B cell (primary cell): ENCODE measurements at regions of chr13 and their contacts with region 1.

Region 1: GRCh38 chr13:20566898-20567874 is at the start of gene IFT88:
- DNase-seq: peak; percentile 84
- ATAC-seq: peak; percentile 90
- H3K4me3 ChIP-seq: peak within 1 kb of the TSS; percentile 64 to 72 (median 67)
- H3K4me3 Mint-ChIP-seq: peak within 1 kb of the TSS; percentile 94
- H3K27ac ChIP-seq: peak within 1 kb of the TSS; percentile 55 to 80
- H3K27ac Mint-ChIP-seq: peak within 1 kb of the TSS; percentile 93
- H3K4me1 ChIP-seq: peaks cover 11 to 12% of the 10 kb centered on the region in 2 donors
- H3K4me1 Mint-ChIP-seq: peaks cover 17% of the 10 kb centered on the region
- H3K27me3 ChIP-seq: no peaks in the 10 kb centered on the region
- H3K27me3 Mint-ChIP-seq: no peaks in the 10 kb centered on the region
- CTCF ChIP-seq: no peak
- total RNA-seq, gene IFT88: 20.2 and 23.3 TPM in 2 replicates

Region 2: GRCh38 chr13:19863323-19864023 is 703.7 kb before region 1 on chr13 and contains the start of gene ZMYM5:
- CTCF ChIA-PET with region 1: no interaction called
- POLR2A ChIA-PET with region 1: no interaction called
- intact Hi-C with region 1: loop called (anchors 2 kb)
- DNase-seq: peak; percentile 97
- ATAC-seq: peak; percentile 88
- H3K4me3 ChIP-seq: peak within 1 kb of the TSS; percentile 71 to 95 (median 83)
- H3K4me3 Mint-ChIP-seq: peak within 1 kb of the TSS; percentile 93
- H3K27ac ChIP-seq: peak within 1 kb of the TSS; percentile 92 to 94
- H3K27ac Mint-ChIP-seq: peak within 1 kb of the TSS; percentile 97
- H3K4me1 ChIP-seq: peaks cover 22 to 26% of the 10 kb centered on the region in 2 donors
- H3K4me1 Mint-ChIP-seq: peaks cover 31% of the 10 kb centered on the region
- H3K27me3 ChIP-seq: no peaks in the 10 kb centered on the region
- H3K27me3 Mint-ChIP-seq: no peaks in the 10 kb centered on the region
- CTCF ChIP-seq: no peak
- total RNA-seq, gene ZMYM5: 23.0 and 26.8 TPM in 2 replicates

Region 3: DNA sequence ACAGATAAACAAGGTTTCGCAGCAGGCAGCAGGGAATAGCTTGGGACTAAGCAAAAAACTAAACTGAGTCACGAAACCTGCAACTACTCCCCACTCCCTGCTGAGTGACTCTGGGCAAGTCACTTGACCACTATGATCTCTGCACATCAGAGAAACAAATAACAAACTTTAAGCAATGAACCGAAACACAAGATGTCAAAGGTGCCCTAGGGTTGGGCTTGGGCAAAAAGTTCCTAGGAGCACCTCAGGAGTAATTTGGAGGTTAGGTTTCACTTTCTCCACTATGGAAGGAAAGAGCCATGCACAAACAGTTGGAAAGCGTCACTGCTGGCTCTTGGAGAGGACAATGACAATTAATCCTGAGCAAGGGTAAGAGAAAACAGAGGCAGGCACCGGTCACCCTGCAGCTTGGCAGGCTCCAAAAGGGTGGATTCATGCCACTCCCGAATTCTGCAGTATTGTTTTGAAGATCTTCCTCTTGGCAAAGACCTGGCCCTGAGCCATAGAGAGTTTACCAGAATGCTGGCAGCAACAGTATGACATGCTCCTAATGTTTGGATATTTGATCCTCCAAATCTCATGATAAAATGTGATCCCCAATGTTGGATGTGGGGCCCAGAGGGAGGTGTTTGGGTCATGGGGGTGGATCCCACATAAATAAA is 101.8 kb before region 1 on chr13:
- CTCF ChIA-PET with region 1: no interaction called
- POLR2A ChIA-PET with region 1: no interaction called
- intact Hi-C with region 1: no loop called
- DNase-seq: no peak
- ATAC-seq: no peak
- H3K4me3 ChIP-seq: no peak overlapping the region
- H3K4me3 Mint-ChIP-seq: no peak overlapping the region
- H3K27ac ChIP-seq: no peak overlapping the region
- H3K27ac Mint-ChIP-seq: no peak overlapping the region
- H3K4me1 ChIP-seq: no peaks in the 10 kb centered on the region
- H3K4me1 Mint-ChIP-seq: no peaks in the 10 kb centered on the region
- H3K27me3 ChIP-seq: no peaks in the 10 kb centered on the region
- H3K27me3 Mint-ChIP-seq: no peaks in the 10 kb centered on the region
- CTCF ChIP-seq: no peak

Region 4: GRCh38 chr13:20525690-20526544 is 41.3 kb before region 1 on chr13 and contains the start of gene CRYL1:
- CTCF ChIA-PET with region 1: interaction called, 3 read pairs
- POLR2A ChIA-PET with region 1: no interaction called
- intact Hi-C with region 1: loop called (anchors 1 kb)
- DNase-seq: peak; percentile 82
- ATAC-seq: peak; percentile 90
- H3K4me3 ChIP-seq: peak within 1 kb of the TSS; percentile 65 to 79 (median 74)
- H3K4me3 Mint-ChIP-seq: peak within 1 kb of the TSS; percentile 91
- H3K27ac ChIP-seq: peak within 1 kb of the TSS; percentile 60 to 73
- H3K27ac Mint-ChIP-seq: peak within 1 kb of the TSS; percentile 86
- H3K4me1 ChIP-seq: peaks cover 6 to 15% of the 10 kb centered on the region in 2 donors
- H3K4me1 Mint-ChIP-seq: peaks cover 14% of the 10 kb centered on the region
- H3K27me3 ChIP-seq: peaks cover 0 to 5% (median 1%) of the 10 kb centered on the region in 4 experiments
- H3K27me3 Mint-ChIP-seq: peaks cover 6% of the 10 kb centered on the region
- CTCF ChIP-seq: no peak
- total RNA-seq, gene CRYL1: 6.5 and 11.8 TPM in 2 replicates

Region 5: DNA sequence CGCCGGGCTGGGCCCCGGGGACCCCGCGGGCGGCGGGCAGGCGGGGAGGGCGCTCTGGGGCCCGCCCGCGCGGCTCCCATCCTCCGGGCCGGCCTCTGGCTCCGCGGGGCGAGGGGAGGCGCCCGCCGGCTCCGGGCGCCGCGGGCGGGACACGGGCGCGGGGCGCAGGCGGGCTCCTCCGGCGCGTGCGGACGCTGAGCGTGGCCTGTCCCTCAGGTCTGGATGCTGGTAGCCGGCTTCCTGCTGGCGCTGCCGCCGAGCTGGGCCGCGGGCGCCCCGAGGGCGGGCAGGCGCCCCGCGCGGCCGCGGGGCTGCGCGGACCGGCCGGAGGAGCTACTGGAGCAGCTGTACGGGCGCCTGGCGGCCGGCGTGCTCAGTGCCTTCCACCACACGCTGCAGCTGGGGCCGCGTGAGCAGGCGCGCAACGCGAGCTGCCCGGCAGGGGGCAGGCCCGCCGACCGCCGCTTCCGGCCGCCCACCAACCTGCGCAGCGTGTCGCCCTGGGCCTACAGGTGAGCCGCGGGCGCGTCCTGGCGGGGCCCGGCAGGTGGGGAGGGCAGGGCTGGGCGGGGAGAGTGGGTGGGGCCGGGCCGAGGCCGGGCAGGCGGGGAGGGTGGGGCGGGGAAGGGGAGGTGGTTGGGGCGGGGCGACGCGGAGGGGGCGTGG is 136.7 kb after region 1 on chr13:
- CTCF ChIA-PET with region 1: interaction called, 4 read pairs
- POLR2A ChIA-PET with region 1: no interaction called
- intact Hi-C with region 1: loop called (anchors 2 kb)
- DNase-seq: peak; percentile 88
- ATAC-seq: peak; percentile 88
- H3K4me3 ChIP-seq: peak overlapping the region in 3 of 5 experiments; percentile 15 to 40 (median 29)
- H3K4me3 Mint-ChIP-seq: peak overlapping the region; percentile 52
- H3K27ac ChIP-seq: no peak overlapping the region
- H3K27ac Mint-ChIP-seq: no peak overlapping the region
- H3K4me1 ChIP-seq: peaks cover 11 to 12% of the 10 kb centered on the region in 2 donors
- H3K4me1 Mint-ChIP-seq: peaks cover 12% of the 10 kb centered on the region
- H3K27me3 ChIP-seq: peaks cover 0 to 27% (median 18%) of the 10 kb centered on the region in 4 experiments
- H3K27me3 Mint-ChIP-seq: peaks cover 16% of the 10 kb centered on the region
- CTCF ChIP-seq: peak; percentile 43

Region 6: DNA sequence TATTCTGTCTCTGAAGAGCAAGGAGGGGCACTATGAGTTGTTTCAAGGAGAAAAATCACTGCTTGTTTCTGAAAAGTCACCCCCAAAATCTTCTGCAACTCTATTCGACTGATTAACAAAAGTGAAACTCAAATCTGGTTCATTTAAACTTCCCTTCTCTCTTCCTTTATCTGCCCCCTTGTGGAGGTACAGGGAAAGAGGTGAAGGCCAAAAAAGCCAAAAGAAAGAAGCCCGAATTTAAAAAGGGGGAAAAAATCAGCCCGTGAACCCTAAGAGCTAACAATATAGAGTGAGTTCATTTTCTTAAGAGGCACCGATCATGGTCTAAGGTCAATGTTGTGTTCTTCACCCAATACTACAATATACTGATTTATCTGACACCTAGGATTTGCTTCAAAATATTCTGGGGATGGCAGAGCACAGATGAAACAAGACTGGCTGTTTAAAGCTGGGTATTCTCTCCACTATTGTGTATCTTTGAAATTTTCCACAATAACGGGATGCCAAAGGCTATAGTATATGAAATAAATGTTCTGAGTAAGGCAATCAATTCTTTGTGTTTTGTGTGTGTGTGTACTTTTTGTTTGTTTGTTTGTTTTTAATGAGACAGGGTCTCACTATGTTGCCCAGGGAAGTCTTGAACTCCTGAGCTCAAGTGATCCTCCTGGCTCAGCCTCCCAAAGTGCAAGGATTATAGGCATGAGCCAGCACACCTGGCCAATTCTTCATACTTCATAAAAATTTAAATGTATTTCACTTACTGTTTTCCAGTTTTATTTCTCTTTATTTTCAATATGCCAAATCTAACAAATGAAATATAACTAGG is 261.6 kb after region 1 on chr13:
- CTCF ChIA-PET with region 1: interaction called, 6 read pairs
- POLR2A ChIA-PET with region 1: no interaction called
- intact Hi-C with region 1: loop called (anchors 5 kb)
- DNase-seq: peak; percentile 76
- ATAC-seq: peak; percentile 82
- H3K4me3 ChIP-seq: no peak overlapping the region
- H3K4me3 Mint-ChIP-seq: peak overlapping the region; percentile 32
- H3K27ac ChIP-seq: peak overlapping the region in 1 of 2 donors; percentile 74
- H3K27ac Mint-ChIP-seq: peak overlapping the region; percentile 8
- H3K4me1 ChIP-seq: no peaks in the 10 kb centered on the region
- H3K4me1 Mint-ChIP-seq: peaks cover 9% of the 10 kb centered on the region
- H3K27me3 ChIP-seq: no peaks in the 10 kb centered on the region
- H3K27me3 Mint-ChIP-seq: no peaks in the 10 kb centered on the region
- CTCF ChIP-seq: peak; percentile 81